OCI-LY7 (cell line): ENCODE measurements at regions of chr20 and their contacts with region 1.

Region 1: GRCh38 chr20:45971675-45972499 is at the start of gene ZNF335:
- DNase-seq: peak; percentile 98
- H3K4me3 ChIP-seq: peak within 1 kb of the TSS; percentile 94
- H3K27ac ChIP-seq: peak within 1 kb of the TSS; percentile 94
- H3K4me1 ChIP-seq: peaks cover 25% of the 10 kb centered on the region
- CTCF ChIP-seq: no peak
- total RNA-seq, gene ZNF335: 15.0 and 21.0 TPM in 2 replicates

Region 2: DNA sequence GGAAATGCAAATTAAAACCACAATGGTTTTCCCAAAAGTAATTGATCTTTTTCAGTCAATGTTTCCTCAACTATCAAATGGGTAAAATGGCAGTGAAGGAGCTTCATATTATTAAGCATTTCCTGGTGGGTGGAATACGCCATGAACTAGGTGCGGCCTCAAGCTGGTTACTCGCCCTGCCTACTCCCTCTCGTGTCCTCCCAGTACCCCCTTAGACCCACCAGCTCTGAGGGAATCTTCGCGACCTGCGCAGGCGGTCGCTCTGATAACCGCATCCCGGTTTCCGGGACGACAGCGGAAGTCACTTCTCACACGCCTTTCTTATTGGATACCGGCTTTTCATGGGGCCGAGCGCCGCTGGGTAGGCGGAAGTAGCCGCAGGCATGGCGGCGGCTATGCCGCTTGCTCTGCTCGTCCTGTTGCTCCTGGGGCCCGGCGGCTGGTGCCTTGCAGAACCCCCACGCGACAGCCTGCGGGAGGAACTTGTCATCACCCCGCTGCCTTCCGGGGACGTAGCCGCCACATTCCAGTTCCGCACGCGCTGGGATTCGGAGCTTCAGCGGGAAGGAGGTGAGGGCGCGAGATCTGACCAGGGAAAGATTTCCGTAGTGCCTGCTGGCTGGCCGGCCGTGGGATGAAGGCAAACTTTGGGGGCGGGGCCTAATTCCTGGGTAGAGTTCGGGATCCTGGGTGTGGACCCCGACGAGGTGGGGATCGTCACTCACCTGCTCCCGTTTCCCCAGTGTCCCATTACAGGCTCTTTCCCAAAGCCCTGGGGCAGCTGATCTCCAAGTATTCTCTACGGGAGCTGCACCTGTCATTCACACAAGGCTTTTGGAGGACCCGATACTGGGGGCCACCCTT is 555.9 kb before region 1 on chr20 and contains the start of gene PIGT:
- CTCF ChIA-PET with region 1: no interaction called
- POLR2A ChIA-PET with region 1: no interaction called
- intact Hi-C with region 1: loop called (anchors 5 kb)
- DNase-seq: peak; percentile 91
- H3K4me3 ChIP-seq: peak within 1 kb of the TSS; percentile 98
- H3K27ac ChIP-seq: peak within 1 kb of the TSS; percentile 84
- H3K4me1 ChIP-seq: peaks cover 55% of the 10 kb centered on the region
- CTCF ChIP-seq: no peak
- total RNA-seq, gene PIGT: 75.7 and 104 TPM in 2 replicates

Region 3: DNA sequence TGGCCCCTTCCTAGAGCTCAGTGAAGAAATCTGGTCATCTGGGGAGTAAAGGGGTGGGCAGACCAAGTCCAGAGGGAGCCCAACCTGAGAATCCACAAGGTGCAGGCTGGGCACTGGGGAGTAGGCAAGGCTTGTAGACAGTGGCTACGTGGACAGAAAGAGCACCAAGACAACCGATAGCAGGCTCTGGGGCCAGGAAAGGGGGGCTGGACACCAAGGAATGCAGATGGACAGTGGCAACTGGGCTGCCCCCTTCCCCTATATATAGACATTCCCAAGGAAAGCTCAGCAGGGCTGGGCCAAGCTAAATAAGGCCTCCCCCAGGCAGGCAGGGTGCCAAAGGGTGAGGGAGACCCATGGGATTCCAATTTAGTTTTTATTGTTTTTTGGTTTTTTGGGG is 143.3 kb before region 1 on chr20:
- CTCF ChIA-PET with region 1: no interaction called
- POLR2A ChIA-PET with region 1: no interaction called
- intact Hi-C with region 1: no loop called
- DNase-seq: no peak
- H3K4me3 ChIP-seq: no peak overlapping the region
- H3K27ac ChIP-seq: no peak overlapping the region
- H3K4me1 ChIP-seq: peaks cover under 1% of the 10 kb centered on the region
- CTCF ChIP-seq: no peak

Region 4: DNA sequence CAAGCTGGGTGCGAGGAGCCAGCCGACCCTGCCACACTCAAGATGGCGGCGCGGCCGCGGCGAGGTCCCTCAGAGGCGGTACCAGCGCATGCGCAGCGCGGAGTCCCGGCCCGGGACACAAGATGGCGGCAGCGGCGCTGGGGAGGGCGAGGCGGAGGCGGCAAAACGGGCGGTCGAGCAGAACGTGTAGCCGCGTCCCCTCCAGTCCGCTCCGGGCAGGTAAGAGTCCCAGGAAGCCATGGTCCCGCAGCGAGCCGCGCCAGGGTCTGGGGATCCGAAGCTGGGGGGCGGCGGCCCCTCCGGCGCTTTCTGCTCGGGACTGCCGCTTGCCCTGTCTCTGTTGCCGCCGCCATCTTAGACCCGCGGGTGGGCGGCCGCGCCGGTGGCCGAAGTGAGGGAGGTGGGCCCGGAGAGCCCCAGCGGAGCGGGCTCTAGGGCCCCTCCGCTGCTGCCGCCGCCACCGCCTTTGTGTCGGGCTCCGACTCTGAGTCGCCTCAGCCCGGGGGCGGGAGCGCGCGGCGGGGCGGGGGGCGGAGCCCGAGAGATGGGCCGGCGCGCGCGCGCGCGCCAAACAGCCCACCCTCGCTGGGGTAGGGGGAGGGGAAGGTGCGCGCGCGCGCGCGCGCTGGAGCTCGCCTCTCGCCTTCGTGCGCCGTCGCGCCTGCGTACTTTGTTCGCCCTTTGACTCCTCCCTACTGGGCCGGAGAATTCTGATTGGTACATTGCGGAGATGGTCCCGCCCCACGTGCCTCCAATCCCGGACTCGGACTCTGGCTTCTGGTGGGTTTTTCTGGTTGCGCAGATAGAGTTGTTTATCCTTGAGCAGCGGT is 37.1 kb before region 1 on chr20 and contains the start of gene PCIF1:
- CTCF ChIA-PET with region 1: interaction called, 7 read pairs
- POLR2A ChIA-PET with region 1: interaction called, 11 read pairs
- intact Hi-C with region 1: loop called (anchors 1 kb)
- DNase-seq: peak; percentile 98
- H3K4me3 ChIP-seq: peak within 1 kb of the TSS; percentile 87
- H3K27ac ChIP-seq: peak within 1 kb of the TSS; percentile 75
- H3K4me1 ChIP-seq: peaks cover 8% of the 10 kb centered on the region
- CTCF ChIP-seq: no peak
- total RNA-seq, gene PCIF1: 16.7 and 21.2 TPM in 2 replicates

Region 5: GRCh38 chr20:45950330-45950646 is 21.6 kb before region 1 on chr20:
- CTCF ChIA-PET with region 1: no interaction called
- POLR2A ChIA-PET with region 1: no interaction called
- intact Hi-C with region 1: no loop called
- DNase-seq: no peak
- H3K4me3 ChIP-seq: no peak overlapping the region
- H3K27ac ChIP-seq: no peak overlapping the region
- H3K4me1 ChIP-seq: peaks cover 8% of the 10 kb centered on the region
- CTCF ChIP-seq: no peak

Region 6: GRCh38 chr20:45995142-45995971 is 23.5 kb after region 1 on chr20:
- CTCF ChIA-PET with region 1: no interaction called
- POLR2A ChIA-PET with region 1: no interaction called
- intact Hi-C with region 1: no loop called
- DNase-seq: no peak
- H3K4me3 ChIP-seq: no peak overlapping the region
- H3K27ac ChIP-seq: no peak overlapping the region
- H3K4me1 ChIP-seq: peaks cover 3% of the 10 kb centered on the region
- CTCF ChIP-seq: no peak

Region 7: DNA sequence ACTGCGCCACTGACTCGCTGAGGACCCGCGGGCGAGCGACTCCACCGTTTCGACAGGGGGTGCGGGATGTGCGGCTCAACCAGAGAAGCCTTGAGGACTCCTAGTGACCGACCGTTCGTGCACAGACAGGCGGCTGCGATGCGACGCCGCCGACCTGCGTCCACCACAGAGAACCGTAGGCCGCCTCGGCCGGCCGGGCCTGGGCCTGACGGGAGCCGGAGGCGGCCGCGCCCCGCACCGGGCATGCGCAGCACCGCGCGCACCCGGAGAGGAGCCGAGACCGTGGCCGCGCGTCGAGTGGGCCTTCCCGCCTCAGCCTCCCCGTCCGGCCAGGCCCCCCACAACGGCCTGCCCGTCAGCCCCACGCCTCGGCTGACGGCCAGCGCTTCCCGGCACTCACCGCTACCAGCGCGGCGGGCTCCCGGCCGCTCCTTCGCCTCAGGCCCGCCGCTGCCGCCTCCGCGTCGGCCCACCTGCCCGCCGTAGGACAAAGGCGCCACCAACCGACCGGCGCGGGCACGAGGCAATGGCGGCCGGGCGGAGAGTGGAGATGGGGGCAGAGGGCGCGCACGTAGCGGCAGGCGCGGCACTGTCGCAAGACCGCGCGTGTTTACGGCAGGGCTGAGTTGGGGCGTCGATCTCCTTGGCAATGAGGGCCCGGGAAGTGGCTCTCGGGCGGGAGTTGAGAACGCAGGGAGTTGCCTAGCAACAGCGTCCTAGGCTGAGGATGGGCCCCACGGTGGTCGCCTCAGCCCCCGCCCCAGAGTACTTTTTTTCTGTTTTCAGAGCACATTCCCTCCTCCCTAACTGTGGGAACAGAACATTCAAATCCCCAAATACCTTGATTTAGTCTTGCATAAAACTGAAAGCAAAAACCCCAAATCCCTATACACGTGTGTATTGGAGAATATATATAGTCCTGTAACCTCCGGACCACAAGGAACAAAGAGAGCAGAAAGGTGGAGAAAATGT is 117.8 kb after region 1 on chr20 and contains the start of gene NCOA5:
- CTCF ChIA-PET with region 1: no interaction called
- POLR2A ChIA-PET with region 1: no interaction called
- intact Hi-C with region 1: loop called (anchors 1 kb)
- DNase-seq: peak; percentile 97
- H3K4me3 ChIP-seq: peak within 1 kb of the TSS; percentile 81
- H3K27ac ChIP-seq: peak within 1 kb of the TSS; percentile 60
- H3K4me1 ChIP-seq: peaks cover 35% of the 10 kb centered on the region
- CTCF ChIP-seq: peak; percentile 38; the same call in 1 of the 2 replicates
- total RNA-seq, gene NCOA5: 21.8 and 23.4 TPM in 2 replicates

Region 8: GRCh38 chr20:46255429-46256104 is 283.7 kb after region 1 on chr20:
- CTCF ChIA-PET with region 1: no interaction called
- POLR2A ChIA-PET with region 1: no interaction called
- intact Hi-C with region 1: no loop called
- DNase-seq: no peak
- H3K4me3 ChIP-seq: no peak overlapping the region
- H3K27ac ChIP-seq: no peak overlapping the region
- H3K4me1 ChIP-seq: no peaks in the 10 kb centered on the region
- CTCF ChIP-seq: no peak

Region 9: DNA sequence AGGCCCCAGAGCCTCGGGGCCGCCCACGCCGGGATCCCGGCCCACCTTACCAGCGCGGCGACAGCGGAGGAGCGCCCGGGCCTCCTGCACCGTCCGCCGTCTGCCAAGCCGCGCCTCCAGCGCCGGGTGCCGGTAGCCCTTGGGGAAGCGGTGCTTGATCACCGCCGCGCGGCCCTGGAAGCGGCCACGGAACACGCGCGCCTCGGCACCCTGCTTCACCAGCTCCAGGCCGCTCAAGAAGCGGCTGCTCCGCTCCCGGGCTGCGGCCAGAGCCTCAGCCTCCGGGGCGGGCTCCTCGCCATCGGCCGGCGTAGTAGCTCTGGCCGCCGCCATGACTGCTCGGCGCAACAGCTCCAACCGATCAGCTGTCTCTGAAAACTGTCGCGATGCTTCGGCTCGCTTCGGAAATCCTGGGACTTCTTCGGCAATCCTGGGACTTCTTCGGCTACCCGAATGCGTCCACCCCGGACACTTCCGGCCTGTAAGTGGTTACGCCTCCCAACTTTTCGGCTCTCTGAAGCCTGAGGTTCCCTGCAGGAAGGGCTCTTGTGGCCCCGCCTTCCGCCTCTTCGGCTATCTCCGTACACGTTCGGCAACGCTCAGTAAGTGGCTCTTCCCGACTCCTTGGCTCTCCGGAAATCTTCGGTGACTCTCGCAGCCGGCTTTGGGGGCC is 717.3 kb after region 1 on chr20 and contains the start of gene TP53RK:
- CTCF ChIA-PET with region 1: no interaction called
- POLR2A ChIA-PET with region 1: no interaction called
- intact Hi-C with region 1: loop called (anchors 5 kb)
- DNase-seq: peak; percentile 98
- H3K4me3 ChIP-seq: peak within 1 kb of the TSS; percentile 74
- H3K27ac ChIP-seq: peak within 1 kb of the TSS; percentile 63
- H3K4me1 ChIP-seq: peaks cover 30% of the 10 kb centered on the region
- CTCF ChIP-seq: 0 out of 2 replicates have a peak, but pooled peaks have one; percentile 20
- total RNA-seq, gene TP53RK: 25.2 and 32.9 TPM in 2 replicates